A549 (cell line): ENCODE measurements at regions of chr18 and their contacts with region 1.

Region 1: DNA sequence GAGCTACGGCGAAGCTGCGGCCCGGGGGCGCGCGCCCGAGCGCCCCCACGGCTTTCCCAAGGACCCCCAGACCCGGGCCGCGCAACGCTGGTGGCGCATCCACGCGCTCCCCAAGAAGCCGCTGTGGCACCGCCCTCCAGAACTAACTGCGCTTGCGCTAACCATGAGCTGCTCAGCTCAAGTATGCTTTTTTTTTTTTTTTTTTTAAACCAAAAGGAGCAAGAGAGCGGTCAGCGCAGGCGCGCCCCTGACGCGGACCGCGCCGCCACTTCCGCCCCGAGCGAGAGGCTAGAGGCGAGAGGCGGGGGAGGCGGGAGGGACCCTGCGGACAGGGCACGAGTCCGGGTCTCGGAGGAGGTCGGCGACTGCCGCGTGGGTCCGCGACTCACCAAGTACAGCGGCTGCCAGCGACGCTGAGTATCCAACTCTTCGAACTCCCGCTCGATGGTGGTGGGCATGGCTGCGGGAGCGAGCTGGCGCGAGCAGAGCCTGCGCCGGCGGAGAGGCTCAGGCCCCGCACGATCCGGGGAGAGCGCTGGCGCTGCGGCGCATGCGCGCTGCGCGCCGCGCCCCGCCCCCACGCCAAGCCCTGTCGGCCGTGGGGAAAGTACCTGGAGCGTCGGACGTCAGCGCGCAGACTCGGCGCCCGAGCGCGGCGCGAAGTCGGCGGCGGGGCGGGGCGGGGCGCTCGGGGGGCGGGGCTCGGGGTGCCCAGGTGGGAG is at the start of gene PTPN2:
- DNase-seq: peak; percentile 74 to 91
- ATAC-seq: peak; percentile 90 to 93
- H3K4me3 ChIP-seq: peak within 1 kb of the TSS; percentile 90
- H3K27ac ChIP-seq: peak within 1 kb of the TSS; percentile 94 to 100
- H3K4me1 ChIP-seq: peaks cover 31% of the 10 kb centered on the region; the same call in 2 of the 3 replicates
- CTCF ChIP-seq: no peak
- EP300 ChIP-seq: no peak
- POLR2A ChIP-seq: peak; percentile 94
- RAD21 ChIP-seq: no peak
- polyA plus RNA-seq, gene PTPN2: 32.4 and 33.3 TPM in 2 replicates

Region 2: DNA sequence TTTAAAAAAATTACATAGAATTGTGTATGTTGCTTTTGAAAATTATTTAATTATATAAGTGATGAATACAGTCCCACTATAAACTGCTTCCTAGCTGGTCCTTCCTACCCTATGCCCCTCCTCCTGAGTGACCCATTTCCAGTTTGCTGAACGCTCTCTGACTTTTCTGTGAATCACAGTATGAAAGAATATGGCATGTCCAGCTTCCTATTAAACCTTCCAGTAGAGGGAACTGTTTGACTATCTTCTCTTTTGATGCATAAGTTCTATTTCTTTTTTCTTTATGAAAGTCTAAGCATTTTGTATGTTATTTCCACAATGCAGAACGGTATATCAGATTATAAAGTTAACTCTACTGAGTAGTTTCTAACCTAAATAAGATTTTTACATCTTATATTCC is 139.7 kb before region 1 on chr18:
- CTCF ChIA-PET with region 1: interaction called, 84 read pairs
- POLR2A ChIA-PET with region 1: interaction called, 13 read pairs
- DNase-seq: peak; percentile 52 to 69
- ATAC-seq: peak; percentile 65 to 76; a peak in 4 of 6 replicates
- H3K4me3 ChIP-seq: no peak overlapping the region
- H3K27ac ChIP-seq: no peak overlapping the region
- H3K4me1 ChIP-seq: peaks cover 36% of the 10 kb centered on the region
- CTCF ChIP-seq: peak; percentile 62
- EP300 ChIP-seq: no peak
- POLR2A ChIP-seq: no peak
- RAD21 ChIP-seq: peak; percentile 70 to 81

Region 3: GRCh38 chr18:12838178-12838634 is 45.6 kb before region 1 on chr18:
- CTCF ChIA-PET with region 1: no interaction called
- POLR2A ChIA-PET with region 1: interaction called, 20 read pairs
- DNase-seq: peak; percentile 65 to 92
- ATAC-seq: peak; percentile 98
- H3K4me3 ChIP-seq: peak overlapping the region; percentile 18; the same call in 2 of the 3 replicates
- H3K27ac ChIP-seq: peak overlapping the region; percentile 80 to 87
- H3K4me1 ChIP-seq: peaks cover 34% of the 10 kb centered on the region
- CTCF ChIP-seq: no peak
- EP300 ChIP-seq: peak; percentile 57 to 76; a peak in 4 of 5 replicates
- POLR2A ChIP-seq: no peak
- RAD21 ChIP-seq: 0 out of 5 replicates have a peak, but pooled peaks of 1 of the 2 experiments have one; percentile 12

Region 4: GRCh38 chr18:12843420-12844350 is 40.2 kb before region 1 on chr18:
- CTCF ChIA-PET with region 1: no interaction called
- POLR2A ChIA-PET with region 1: interaction called, 13 read pairs
- DNase-seq: no peak
- ATAC-seq: peak in 1 of 2 experiments; percentile 33; a peak in 1 of 6 replicates
- H3K4me3 ChIP-seq: no peak overlapping the region
- H3K27ac ChIP-seq: peak overlapping the region in 1 of 2 experiments; percentile 63; a peak in 3 of 6 replicates
- H3K4me1 ChIP-seq: peaks cover 20% of the 10 kb centered on the region
- CTCF ChIP-seq: no peak
- EP300 ChIP-seq: no peak
- POLR2A ChIP-seq: no peak
- RAD21 ChIP-seq: no peak

Region 5: GRCh38 chr18:12862467-12862866 is 21.4 kb before region 1 on chr18:
- CTCF ChIA-PET with region 1: interaction called, 3 read pairs
- POLR2A ChIA-PET with region 1: interaction called, 23 read pairs
- DNase-seq: no peak
- ATAC-seq: no peak
- H3K4me3 ChIP-seq: no peak overlapping the region
- H3K27ac ChIP-seq: no peak overlapping the region; a peak in 1 of 6 replicates
- H3K4me1 ChIP-seq: peaks cover 17% of the 10 kb centered on the region; the same call in 2 of the 3 replicates
- CTCF ChIP-seq: no peak
- EP300 ChIP-seq: no peak
- POLR2A ChIP-seq: no peak
- RAD21 ChIP-seq: no peak

Region 6: DNA sequence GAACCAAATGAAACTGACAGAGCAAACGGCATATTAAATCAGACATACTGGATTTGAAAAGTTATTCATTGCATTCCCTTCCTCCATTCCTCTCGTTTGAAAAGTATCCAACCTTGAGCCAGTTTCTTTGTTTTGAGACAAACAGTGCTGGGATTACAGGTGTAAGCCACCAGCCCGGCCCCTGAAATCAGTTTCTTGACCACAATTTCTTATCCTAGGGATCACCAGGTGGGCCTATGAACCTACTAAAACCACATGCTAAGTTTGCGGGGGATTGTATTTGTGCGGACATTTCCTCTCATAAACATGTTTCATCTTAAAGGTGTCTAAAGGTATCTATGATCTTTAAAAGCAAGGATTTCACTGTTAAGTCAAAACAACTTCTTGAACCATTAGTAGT is 11.4 kb before region 1 on chr18:
- CTCF ChIA-PET with region 1: no interaction called
- POLR2A ChIA-PET with region 1: interaction called, 18 read pairs
- DNase-seq: no peak
- ATAC-seq: no peak
- H3K4me3 ChIP-seq: no peak overlapping the region
- H3K27ac ChIP-seq: no peak overlapping the region
- H3K4me1 ChIP-seq: no peaks in the 10 kb centered on the region
- CTCF ChIP-seq: no peak
- EP300 ChIP-seq: no peak
- POLR2A ChIP-seq: no peak
- RAD21 ChIP-seq: no peak

Region 7: GRCh38 chr18:12973562-12974213 is 89.8 kb after region 1 on chr18:
- CTCF ChIA-PET with region 1: no interaction called
- POLR2A ChIA-PET with region 1: no interaction called
- DNase-seq: no peak
- ATAC-seq: no peak
- H3K4me3 ChIP-seq: no peak overlapping the region
- H3K27ac ChIP-seq: no peak overlapping the region
- H3K4me1 ChIP-seq: no peaks in the 10 kb centered on the region
- CTCF ChIP-seq: no peak
- EP300 ChIP-seq: no peak
- POLR2A ChIP-seq: no peak
- RAD21 ChIP-seq: no peak

Region 8: GRCh38 chr18:12990967-12991838 is 107.4 kb after region 1 on chr18 and contains the start of gene CEP192:
- CTCF ChIA-PET with region 1: no interaction called
- POLR2A ChIA-PET with region 1: interaction called, 19 read pairs
- DNase-seq: peak; percentile 73 to 98
- ATAC-seq: peak; percentile 95 to 97
- H3K4me3 ChIP-seq: peak within 1 kb of the TSS; percentile 66
- H3K27ac ChIP-seq: peak within 1 kb of the TSS; percentile 78 to 94
- H3K4me1 ChIP-seq: peaks cover 17% of the 10 kb centered on the region
- CTCF ChIP-seq: no peak
- EP300 ChIP-seq: no peak
- POLR2A ChIP-seq: peak; percentile 90
- RAD21 ChIP-seq: no peak
- polyA plus RNA-seq, gene CEP192: 19.2 and 21.1 TPM in 2 replicates